GM12878 (cell line): ENCODE measurements at regions of chr11 and their contacts with region 1.

Region 1: DNA sequence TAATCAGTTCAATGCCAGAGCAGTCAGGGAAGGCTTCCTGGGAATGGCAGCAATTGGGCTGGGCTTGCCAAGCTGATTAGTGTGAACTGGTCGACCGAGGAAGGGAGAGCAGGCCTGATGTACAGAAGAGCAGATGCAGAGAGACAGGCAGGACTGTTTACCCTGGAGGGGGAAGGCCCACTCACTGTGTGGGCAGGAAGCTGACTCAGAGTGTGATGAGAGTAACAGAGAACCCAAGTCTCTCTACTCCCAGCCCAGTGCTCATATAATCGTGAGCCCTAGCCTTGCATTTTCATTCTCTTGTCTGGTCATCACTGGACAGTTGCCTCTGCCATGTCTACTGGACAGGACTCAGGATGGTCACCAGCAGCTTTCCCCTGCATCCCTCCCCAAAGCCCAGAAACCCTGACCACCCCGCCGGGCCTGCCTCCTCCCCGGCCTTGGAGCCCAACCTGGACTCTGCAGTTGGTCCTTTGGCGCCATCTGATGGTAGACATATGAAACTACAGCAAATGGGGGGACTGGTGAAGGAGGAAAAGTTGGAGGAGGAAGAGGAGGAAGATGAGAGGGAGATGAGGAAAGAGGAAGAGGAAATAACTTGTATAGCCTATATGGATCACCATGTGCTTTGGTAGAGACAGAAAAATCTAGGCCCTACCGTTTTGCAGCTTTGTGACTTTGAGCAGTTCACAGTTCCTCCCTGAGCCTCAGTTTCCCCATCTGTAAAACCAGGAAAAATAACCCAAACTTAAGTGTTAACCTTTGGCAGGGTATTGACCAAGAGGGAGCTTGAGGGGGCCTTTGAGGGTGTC is 43.4 kb upstream of the PRDM11 start:
- DNase-seq: peak; percentile 44
- ATAC-seq: peak; percentile 97
- H3K4me3 ChIP-seq: no peak overlapping the region
- H3K27ac ChIP-seq: no peak overlapping the region
- H3K4me1 ChIP-seq: peaks cover 7% of the 10 kb centered on the region; the same call in 1 of the 2 replicates
- H3K27me3 ChIP-seq: no peaks in the 10 kb centered on the region; a peak in 1 of 4 replicates
- CTCF ChIP-seq: peak; percentile 85 to 92 (median 88)
- EP300 ChIP-seq: no peak
- POLR2A ChIP-seq: no peak
- RAD21 ChIP-seq: peak; percentile 98

Region 2: DNA sequence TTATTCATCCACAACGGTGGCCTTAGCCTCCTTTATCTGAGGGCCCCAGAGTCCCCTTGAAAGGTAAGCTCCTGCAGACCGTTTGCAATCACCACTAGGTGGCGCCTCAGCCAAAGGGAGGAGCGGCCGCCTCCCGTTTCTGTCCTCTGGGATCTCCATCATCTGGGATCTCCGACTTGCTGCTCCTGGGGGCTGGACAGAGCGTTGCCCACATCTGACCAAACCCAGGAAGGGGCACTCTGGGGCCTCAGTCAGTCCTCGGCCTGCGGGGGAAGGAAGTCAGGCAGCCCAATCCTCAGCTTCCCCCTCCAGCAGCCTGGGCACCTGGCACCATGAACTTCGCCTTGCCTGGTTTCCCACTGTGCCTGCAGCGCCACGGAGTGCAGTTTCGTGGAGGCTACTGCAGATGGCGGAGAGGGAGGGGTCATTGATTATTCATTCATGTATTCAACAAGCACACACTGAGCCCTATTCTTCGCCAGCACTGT is 175.8 kb before region 1 on chr11:
- CTCF ChIA-PET with region 1: interaction called, 571 read pairs
- POLR2A ChIA-PET with region 1: no interaction called
- RAD21 ChIA-PET with region 1: interaction called, 21 read pairs
- SMC1A ChIA-PET with region 1: interaction called, 31 read pairs
- in situ Hi-C with region 1: no loop called
- intact Hi-C with region 1: loop called (anchors 2 kb)
- DNase-seq: no peak
- ATAC-seq: peak; percentile 91
- H3K4me3 ChIP-seq: no peak overlapping the region
- H3K27ac ChIP-seq: no peak overlapping the region
- H3K4me1 ChIP-seq: no peaks in the 10 kb centered on the region
- H3K27me3 ChIP-seq: peaks cover 0 to 1% of the 10 kb centered on the region in 2 experiments; a peak in 2 of 4 replicates
- CTCF ChIP-seq: peak; percentile 77 to 83 (median 83)
- EP300 ChIP-seq: no peak
- POLR2A ChIP-seq: no peak
- RAD21 ChIP-seq: peak; percentile 59

Region 3: DNA sequence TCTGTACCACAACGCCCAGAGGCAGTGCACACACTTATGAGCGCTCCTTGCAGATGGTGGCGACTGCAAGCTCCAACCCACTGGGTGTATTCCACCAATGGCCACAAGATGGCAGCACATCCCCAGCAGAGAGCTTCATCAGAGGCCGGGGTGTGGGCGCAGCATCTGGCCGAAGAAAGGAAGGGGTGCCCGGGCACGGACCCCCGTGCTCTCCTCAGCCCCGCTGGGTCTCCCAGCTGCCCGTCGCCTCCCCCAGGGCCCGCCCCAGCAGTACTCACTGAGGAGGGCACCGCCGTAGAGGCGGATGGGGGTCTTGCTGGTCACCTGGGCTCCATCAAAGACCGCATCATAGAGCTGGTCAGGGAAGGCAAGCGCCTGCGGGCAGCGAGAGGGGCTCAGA is 166.5 kb before region 1 on chr11:
- CTCF ChIA-PET with region 1: interaction called, 571 read pairs
- POLR2A ChIA-PET with region 1: no interaction called
- RAD21 ChIA-PET with region 1: interaction called, 105 read pairs
- SMC1A ChIA-PET with region 1: interaction called, 80 read pairs
- in situ Hi-C with region 1: loop called (anchors 5 kb)
- intact Hi-C with region 1: loop called (anchors 1 kb)
- DNase-seq: no peak
- ATAC-seq: peak; percentile 97
- H3K4me3 ChIP-seq: no peak overlapping the region
- H3K27ac ChIP-seq: no peak overlapping the region
- H3K4me1 ChIP-seq: no peaks in the 10 kb centered on the region
- H3K27me3 ChIP-seq: no peaks in the 10 kb centered on the region
- CTCF ChIP-seq: peak; percentile 86 to 94 (median 92)
- EP300 ChIP-seq: no peak
- POLR2A ChIP-seq: no peak
- RAD21 ChIP-seq: peak; percentile 97

Region 4: DNA sequence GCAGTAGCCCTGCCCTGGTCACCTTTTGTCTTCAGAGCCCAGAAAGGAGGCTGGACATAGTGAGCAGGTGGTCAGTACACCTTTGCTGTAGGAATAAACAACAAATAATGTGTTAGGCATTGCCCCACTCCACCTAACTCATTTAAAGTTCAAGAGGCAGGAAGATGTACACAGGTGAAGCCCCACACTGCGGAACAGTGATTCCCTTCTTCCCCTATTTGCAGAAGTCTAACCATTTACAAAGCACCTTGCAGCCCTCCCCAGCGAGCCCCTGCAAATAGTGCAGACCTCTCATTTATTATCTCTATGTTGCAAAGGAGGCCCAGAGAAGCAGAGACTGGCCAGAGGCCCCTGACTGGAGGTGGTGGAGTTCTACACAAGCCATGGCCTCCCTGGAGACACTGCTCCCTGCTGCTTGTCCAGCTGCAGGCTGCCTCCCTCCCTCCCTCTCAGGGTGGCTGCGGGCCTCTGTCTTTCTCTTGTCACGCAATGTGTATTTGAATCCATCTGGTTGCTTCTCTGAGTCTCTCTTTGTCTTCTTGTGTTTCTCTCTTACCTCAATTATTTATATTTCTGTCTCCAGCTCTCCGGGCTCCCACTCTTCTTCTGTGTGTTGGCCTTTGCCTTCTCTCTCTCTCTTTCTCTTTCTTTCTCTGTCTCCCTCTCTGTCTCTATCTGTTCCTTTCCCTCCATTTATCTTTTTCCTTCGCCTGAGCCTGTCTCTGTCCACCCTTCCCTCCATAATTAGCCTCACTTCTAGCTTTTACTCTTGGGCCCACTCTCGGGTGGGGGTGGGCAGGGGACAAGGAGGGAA is 15.7 kb before region 1 on chr11:
- CTCF ChIA-PET with region 1: no interaction called
- POLR2A ChIA-PET with region 1: no interaction called
- RAD21 ChIA-PET with region 1: no interaction called
- SMC1A ChIA-PET with region 1: no interaction called
- in situ Hi-C with region 1: no loop called
- intact Hi-C with region 1: no loop called
- DNase-seq: no peak
- ATAC-seq: no peak
- H3K4me3 ChIP-seq: no peak overlapping the region
- H3K27ac ChIP-seq: no peak overlapping the region
- H3K4me1 ChIP-seq: peaks cover 3% of the 10 kb centered on the region; the same call in 1 of the 2 replicates
- H3K27me3 ChIP-seq: peaks cover 0 to 2% of the 10 kb centered on the region in 2 experiments; a peak in 3 of 4 replicates
- CTCF ChIP-seq: no peak
- EP300 ChIP-seq: no peak
- POLR2A ChIP-seq: no peak
- RAD21 ChIP-seq: no peak

Region 5: GRCh38 chr11:45294499-45294898 is 191.5 kb after region 1 on chr11:
- CTCF ChIA-PET with region 1: interaction called, 3 read pairs
- POLR2A ChIA-PET with region 1: no interaction called
- RAD21 ChIA-PET with region 1: no interaction called
- SMC1A ChIA-PET with region 1: no interaction called
- in situ Hi-C with region 1: loop called (anchors 5 kb)
- intact Hi-C with region 1: no loop called
- DNase-seq: no peak
- ATAC-seq: no peak
- H3K4me3 ChIP-seq: no peak overlapping the region
- H3K27ac ChIP-seq: no peak overlapping the region
- H3K4me1 ChIP-seq: no peaks in the 10 kb centered on the region
- H3K27me3 ChIP-seq: no peaks in the 10 kb centered on the region; a peak in 1 of 4 replicates
- CTCF ChIP-seq: no peak
- EP300 ChIP-seq: no peak
- POLR2A ChIP-seq: no peak
- RAD21 ChIP-seq: no peak

Region 6: DNA sequence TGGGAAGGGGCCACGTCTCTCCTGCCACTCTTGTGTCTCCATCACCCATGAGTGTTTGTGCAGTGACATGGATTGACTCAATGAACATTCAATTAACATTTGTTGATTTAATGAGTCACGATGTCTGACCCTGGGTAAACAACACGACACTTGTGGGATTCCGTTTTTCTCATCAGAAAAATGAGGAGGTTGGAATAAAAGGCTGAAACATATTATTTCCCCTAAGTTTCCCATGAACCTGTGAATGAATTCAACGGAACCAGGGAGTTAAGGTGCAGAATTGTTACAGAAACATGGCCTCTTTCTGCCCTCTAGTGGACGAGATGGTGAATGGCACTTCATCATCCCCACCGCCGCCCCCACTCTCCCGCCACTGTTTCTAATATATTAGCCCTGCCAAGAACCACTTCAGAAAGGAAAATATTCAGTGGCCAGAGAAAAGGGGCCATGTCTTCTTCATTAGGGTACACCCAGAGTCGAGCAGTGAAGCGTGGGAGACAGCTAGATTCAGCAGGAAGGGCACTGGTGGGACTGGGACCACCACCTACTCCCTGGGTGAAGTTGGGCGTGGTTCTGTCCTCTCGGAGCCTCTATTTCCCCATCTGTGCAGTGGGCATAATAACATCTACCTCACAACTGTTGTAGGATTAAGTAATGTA is 229.4 kb after region 1 on chr11:
- CTCF ChIA-PET with region 1: interaction called, 20 read pairs
- POLR2A ChIA-PET with region 1: no interaction called
- RAD21 ChIA-PET with region 1: no interaction called
- SMC1A ChIA-PET with region 1: interaction called, 3 read pairs
- in situ Hi-C with region 1: loop called (anchors 5 kb)
- intact Hi-C with region 1: no loop called
- DNase-seq: no peak
- ATAC-seq: peak; percentile 77
- H3K4me3 ChIP-seq: no peak overlapping the region
- H3K27ac ChIP-seq: no peak overlapping the region
- H3K4me1 ChIP-seq: no peaks in the 10 kb centered on the region
- H3K27me3 ChIP-seq: no peaks in the 10 kb centered on the region
- CTCF ChIP-seq: peak; percentile 45 to 75 (median 50)
- EP300 ChIP-seq: no peak
- POLR2A ChIP-seq: no peak
- RAD21 ChIP-seq: peak; percentile 66